ENCODE measurements at regions of chr14 and their contacts with region 1.

Region 1: DNA sequence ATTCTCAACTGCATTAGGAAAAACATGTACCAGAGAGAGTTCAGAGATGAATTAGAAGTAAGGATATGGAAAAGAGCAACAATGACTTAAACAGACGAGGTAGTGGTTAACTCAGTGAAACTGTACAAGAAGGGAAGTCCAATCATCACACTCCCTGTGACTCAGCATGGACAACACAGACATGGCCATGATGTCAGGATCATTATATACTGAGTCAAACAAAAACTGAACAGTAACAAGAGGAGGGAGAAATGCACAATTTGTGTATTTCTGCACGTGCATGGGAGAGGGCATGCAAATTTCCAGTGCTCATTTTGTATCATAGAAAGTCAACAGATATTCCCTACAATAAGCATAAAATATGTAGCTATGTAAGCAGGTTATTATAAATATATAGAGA is 1037.8 kb downstream of the BCL11B start:
- DNase-seq: no peak
- H3K4me3 Mint-ChIP-seq: no peak overlapping the region
- H3K27ac Mint-ChIP-seq: no peak overlapping the region
- H3K4me1 Mint-ChIP-seq: peaks cover 34% of the 10 kb centered on the region
- H3K27me3 Mint-ChIP-seq: no peaks in the 10 kb centered on the region

Region 2: DNA sequence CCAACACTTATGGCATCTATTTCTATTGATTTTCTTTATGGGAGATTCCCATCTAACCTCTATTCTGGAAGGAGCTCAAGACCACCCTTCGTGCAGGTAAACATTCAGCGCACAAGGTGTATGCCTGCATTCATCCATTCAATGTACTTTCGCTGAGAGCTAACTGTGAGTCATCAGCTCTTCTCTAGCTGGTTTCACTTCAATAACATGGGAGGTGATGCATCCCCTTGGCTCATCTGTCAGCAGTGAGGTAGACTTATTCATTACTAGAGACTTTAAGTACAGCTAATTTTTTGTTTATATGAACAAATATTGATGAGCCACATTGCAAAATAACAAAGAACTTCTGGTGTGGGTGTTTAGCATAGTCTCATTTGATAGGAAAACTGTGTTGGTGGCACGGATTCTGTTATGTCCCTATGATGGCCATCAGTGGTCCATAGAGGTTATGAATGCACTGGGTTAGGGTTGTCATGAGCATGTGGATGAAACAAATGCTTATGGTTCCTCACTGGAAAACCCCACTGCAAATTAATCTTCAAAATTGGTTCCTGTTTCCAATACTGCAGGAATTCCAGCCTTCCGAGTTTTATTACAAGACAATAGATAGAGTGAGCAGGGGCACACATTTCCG is 113.3 kb before region 1 on chr14:
- intact Hi-C with region 1: no loop called
- DNase-seq: no peak
- H3K4me3 Mint-ChIP-seq: no peak overlapping the region
- H3K27ac Mint-ChIP-seq: no peak overlapping the region
- H3K4me1 Mint-ChIP-seq: peaks cover 17% of the 10 kb centered on the region
- H3K27me3 Mint-ChIP-seq: no peaks in the 10 kb centered on the region

Region 3: GRCh38 chr14:98173305-98173704 is 60.9 kb before region 1 on chr14:
- intact Hi-C with region 1: loop called (anchors 1 kb)
- DNase-seq: peak; percentile 45
- H3K4me3 Mint-ChIP-seq: peak overlapping the region; percentile 73
- H3K27ac Mint-ChIP-seq: peak overlapping the region; percentile 90
- H3K4me1 Mint-ChIP-seq: peaks cover 97% of the 10 kb centered on the region
- H3K27me3 Mint-ChIP-seq: no peaks in the 10 kb centered on the region

Region 4: DNA sequence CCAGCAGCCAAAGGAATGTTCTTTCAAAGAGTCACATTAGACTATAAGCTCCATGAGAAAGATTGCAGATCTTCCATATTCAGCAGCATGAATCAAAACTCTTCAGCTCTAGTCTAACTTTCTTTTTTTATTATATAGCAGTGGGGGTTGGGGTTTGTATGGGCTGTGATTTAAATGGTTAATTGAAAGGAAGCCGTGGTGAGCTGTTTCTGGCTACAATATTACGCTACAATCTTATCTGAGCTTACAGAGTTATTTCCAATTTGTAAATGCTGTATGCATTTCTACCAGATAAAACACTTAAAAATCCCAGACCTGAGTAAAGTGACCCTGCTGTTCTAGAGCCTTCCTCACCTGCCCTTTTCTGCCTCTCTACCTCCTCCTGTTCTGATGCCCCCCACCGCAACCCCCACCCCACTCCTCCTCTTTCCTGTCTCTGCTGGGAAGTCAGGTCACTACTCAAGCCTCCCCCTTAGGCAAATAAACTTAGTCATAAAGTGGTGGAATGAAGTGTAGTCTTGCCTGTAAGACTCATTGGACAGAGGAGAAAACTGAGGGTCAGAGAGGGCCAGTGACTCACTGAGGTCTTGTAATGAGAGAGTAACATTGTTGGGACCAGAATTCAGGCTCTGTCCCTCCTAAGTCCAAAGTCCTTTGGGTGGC is 51.7 kb before region 1 on chr14:
- intact Hi-C with region 1: loop called (anchors 1 kb)
- DNase-seq: no peak
- H3K4me3 Mint-ChIP-seq: peak overlapping the region; percentile 55
- H3K27ac Mint-ChIP-seq: peak overlapping the region; percentile 97
- H3K4me1 Mint-ChIP-seq: peaks cover 95% of the 10 kb centered on the region
- H3K27me3 Mint-ChIP-seq: no peaks in the 10 kb centered on the region

Region 5: DNA sequence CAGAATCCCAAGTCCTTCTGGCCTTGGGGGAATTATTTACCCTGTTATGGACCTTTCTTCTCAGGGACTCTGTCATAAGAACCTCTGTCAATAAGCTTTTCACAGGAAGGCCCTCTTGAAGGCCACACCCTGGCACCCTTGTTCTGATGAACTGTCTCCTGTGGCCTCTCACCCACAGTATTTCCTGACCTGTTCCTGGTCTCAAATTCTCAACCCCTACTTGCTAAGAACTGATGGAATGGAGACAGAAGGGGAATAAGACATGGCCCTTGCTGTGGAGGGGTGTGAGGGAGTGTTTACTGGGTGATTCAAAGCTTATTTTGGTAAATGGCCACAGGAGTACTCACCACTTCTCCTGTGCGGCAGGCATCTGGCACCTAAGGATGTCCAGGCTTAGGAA is 45.1 kb before region 1 on chr14:
- intact Hi-C with region 1: loop called (anchors 1 kb)
- DNase-seq: peak; percentile 38
- H3K4me3 Mint-ChIP-seq: peak overlapping the region; percentile 75
- H3K27ac Mint-ChIP-seq: peak overlapping the region; percentile 97
- H3K4me1 Mint-ChIP-seq: peaks cover 100% of the 10 kb centered on the region
- H3K27me3 Mint-ChIP-seq: no peaks in the 10 kb centered on the region

Region 6: DNA sequence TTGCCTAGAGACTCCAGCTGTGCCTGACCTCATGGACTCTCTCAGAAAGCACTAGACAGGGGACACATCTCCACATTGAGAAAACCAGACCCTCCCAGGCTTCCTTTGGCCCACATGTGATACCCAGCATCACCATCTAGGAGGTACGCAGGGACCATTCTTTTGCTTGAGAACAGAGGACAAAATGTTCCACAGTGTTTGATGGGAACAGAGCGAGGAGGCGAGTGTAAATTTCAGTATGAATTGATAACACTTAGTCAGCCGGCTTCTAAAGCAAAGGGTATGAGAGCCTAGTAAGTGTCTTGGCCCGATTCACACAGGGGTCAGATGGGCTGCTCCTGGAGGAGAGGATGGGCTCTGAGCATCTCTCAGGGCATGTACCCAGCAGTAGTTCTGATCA is 14.6 kb before region 1 on chr14:
- intact Hi-C with region 1: loop called (anchors 2 kb)
- DNase-seq: no peak
- H3K4me3 Mint-ChIP-seq: no peak overlapping the region
- H3K27ac Mint-ChIP-seq: peak overlapping the region; percentile 55
- H3K4me1 Mint-ChIP-seq: peaks cover 21% of the 10 kb centered on the region
- H3K27me3 Mint-ChIP-seq: peaks cover 4% of the 10 kb centered on the region

Region 7: GRCh38 chr14:98293576-98293975 is 59.4 kb after region 1 on chr14:
- intact Hi-C with region 1: no loop called
- DNase-seq: no peak
- H3K4me3 Mint-ChIP-seq: no peak overlapping the region
- H3K27ac Mint-ChIP-seq: no peak overlapping the region
- H3K4me1 Mint-ChIP-seq: peaks cover 5% of the 10 kb centered on the region
- H3K27me3 Mint-ChIP-seq: no peaks in the 10 kb centered on the region

Region 8: DNA sequence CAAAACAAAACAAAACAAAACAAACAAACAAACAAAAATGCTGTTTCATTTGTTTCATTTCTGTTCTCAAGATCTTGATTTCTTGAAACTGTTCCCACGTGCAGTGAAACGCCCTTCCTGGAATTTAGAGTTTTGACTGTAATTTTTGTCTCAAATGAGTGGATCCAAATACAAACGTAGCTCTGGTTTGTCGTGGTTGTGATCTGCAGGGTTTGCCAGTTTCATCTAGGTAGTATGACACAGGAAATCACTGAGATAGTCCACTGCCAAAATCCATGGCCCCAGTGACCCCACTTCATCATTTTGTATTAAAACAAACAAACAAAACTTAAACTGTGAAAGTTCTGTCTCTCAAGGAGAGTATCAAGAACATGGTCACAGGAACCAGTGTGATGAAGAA is 199.2 kb after region 1 on chr14:
- intact Hi-C with region 1: loop called (anchors 5 kb)
- DNase-seq: no peak
- H3K4me3 Mint-ChIP-seq: no peak overlapping the region
- H3K27ac Mint-ChIP-seq: peak overlapping the region; percentile 19
- H3K4me1 Mint-ChIP-seq: peaks cover 30% of the 10 kb centered on the region
- H3K27me3 Mint-ChIP-seq: no peaks in the 10 kb centered on the region